PC-9 (cell line): ENCODE measurements at regions of chr1 and their contacts with region 1.

Region 1: DNA sequence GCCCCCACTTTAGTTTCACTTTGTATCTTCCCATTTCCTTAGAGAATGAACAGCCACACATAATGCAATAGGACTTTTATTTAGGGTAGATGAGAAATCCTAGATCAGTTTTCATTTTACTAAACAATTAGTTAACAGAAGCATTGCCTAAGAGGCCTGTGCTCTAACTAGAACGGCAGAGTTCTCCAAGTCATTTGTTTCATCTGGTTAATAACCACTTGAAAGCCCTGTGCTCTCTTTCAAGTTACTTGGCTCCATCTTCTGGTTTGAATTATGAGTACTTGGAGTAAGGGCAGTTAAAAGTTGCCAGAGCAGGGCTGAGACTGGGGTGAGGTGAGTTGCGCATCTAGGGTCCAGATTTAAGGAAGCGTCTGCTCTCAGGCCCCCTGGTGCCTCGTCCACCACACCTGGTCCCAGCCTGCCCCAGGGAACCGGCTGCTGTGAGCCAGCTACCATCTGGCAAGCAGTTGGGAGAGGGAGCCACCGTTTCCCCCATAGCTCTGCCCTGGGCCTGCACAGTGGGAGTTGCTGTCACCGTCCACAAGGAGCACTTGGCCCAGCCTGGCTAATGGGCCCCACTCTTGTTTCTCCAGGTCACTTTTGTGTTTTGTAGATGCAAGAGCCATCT is 18.1 kb upstream of the SLC44A3 start:
- DNase-seq: peak; percentile 48 to 93
- H3K4me3 ChIP-seq: peak overlapping the region; percentile 22; the same call in 1 of the 2 replicates
- H3K27ac ChIP-seq: peak overlapping the region; percentile 79
- H3K4me1 ChIP-seq: peaks cover 24% of the 10 kb centered on the region
- H3K27me3 ChIP-seq: no peaks in the 10 kb centered on the region
- CTCF ChIP-seq: peak; percentile 85

Region 2: DNA sequence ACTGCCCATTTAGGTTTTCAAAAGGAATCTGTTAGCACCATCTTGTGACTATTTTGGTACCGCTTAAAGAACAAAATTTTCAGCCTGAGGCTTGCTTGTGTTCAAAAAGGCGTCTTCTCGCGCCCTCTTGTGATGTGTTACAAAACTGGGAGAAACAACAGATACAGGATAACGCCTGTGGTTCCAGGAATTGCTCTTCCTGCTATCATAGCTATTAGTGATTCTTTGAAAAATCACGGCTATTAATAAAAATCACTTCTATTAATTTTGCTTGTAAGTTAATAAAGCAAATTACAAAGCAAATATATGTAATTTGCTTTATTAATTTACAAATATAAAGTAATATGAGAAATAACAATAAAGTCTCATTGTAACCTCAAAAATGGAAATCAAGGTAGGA is 466.1 kb before region 1 on chr1:
- CTCF ChIA-PET with region 1: interaction called, 4 read pairs
- POLR2A ChIA-PET with region 1: no interaction called
- intact Hi-C with region 1: loop called (anchors 1 kb)
- DNase-seq: peak; percentile 67 to 95
- H3K4me3 ChIP-seq: no peak overlapping the region
- H3K27ac ChIP-seq: peak overlapping the region; percentile 22; the same call in 1 of the 2 replicates
- H3K4me1 ChIP-seq: peaks cover 55% of the 10 kb centered on the region
- H3K27me3 ChIP-seq: no peaks in the 10 kb centered on the region
- CTCF ChIP-seq: peak; percentile 99

Region 3: DNA sequence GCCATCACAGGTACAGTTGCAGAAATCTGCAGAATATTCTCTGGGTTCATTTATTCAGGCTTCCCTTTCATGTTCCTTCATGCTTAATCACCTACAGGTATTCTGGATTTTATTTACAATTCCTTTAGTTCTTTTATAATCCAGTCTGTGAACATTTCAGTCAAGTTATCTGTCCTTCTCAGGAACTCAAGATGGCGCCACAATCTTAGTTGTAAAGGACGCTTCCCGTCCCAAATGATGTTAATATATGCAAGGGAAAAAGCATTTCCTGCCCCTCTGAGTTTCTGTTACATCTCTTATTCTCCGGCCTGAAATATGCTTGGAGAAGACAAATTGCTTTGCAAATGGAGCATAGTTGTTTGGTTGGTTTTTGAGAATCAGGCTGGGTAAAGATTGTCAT is 279.7 kb before region 1 on chr1:
- CTCF ChIA-PET with region 1: no interaction called
- POLR2A ChIA-PET with region 1: interaction called, 8 read pairs
- intact Hi-C with region 1: loop called (anchors 1 kb)
- DNase-seq: no peak
- H3K4me3 ChIP-seq: no peak overlapping the region
- H3K27ac ChIP-seq: no peak overlapping the region
- H3K4me1 ChIP-seq: peaks cover 12% of the 10 kb centered on the region
- H3K27me3 ChIP-seq: no peaks in the 10 kb centered on the region
- CTCF ChIP-seq: peak; percentile 63

Region 4: GRCh38 chr1:94622757-94623156 is 179.3 kb before region 1 on chr1:
- CTCF ChIA-PET with region 1: interaction called, 3 read pairs
- POLR2A ChIA-PET with region 1: interaction called, 4 read pairs
- intact Hi-C with region 1: loop called (anchors 1 kb)
- DNase-seq: peak; percentile 95 to 99
- H3K4me3 ChIP-seq: peak overlapping the region; percentile 41; the same call in 1 of the 2 replicates
- H3K27ac ChIP-seq: peak overlapping the region; percentile 99
- H3K4me1 ChIP-seq: peaks cover 72% of the 10 kb centered on the region
- H3K27me3 ChIP-seq: no peaks in the 10 kb centered on the region
- CTCF ChIP-seq: no peak

Region 5: DNA sequence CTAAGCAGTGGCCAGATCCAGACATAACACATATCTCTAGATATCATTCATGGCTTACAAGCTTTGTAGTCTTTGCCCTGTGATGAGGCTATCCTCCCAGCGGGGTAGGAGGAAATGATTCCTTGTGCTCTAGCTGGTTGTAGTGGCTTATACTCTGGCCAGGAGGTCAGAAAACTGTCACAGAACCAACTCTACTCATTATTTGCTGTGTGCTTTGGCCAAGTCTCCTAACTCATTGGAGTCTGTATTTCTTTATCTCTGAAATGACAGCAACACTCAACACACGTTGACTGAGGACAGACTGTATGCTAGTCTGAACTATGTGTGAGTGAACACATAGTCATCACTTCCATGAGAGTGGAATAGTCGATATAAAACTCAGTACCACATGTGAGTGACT is 143.8 kb before region 1 on chr1:
- CTCF ChIA-PET with region 1: no interaction called
- POLR2A ChIA-PET with region 1: no interaction called
- intact Hi-C with region 1: no loop called
- DNase-seq: no peak
- H3K4me3 ChIP-seq: no peak overlapping the region
- H3K27ac ChIP-seq: peak overlapping the region; percentile 57
- H3K4me1 ChIP-seq: peaks cover 61% of the 10 kb centered on the region
- H3K27me3 ChIP-seq: no peaks in the 10 kb centered on the region
- CTCF ChIP-seq: no peak

Region 6: DNA sequence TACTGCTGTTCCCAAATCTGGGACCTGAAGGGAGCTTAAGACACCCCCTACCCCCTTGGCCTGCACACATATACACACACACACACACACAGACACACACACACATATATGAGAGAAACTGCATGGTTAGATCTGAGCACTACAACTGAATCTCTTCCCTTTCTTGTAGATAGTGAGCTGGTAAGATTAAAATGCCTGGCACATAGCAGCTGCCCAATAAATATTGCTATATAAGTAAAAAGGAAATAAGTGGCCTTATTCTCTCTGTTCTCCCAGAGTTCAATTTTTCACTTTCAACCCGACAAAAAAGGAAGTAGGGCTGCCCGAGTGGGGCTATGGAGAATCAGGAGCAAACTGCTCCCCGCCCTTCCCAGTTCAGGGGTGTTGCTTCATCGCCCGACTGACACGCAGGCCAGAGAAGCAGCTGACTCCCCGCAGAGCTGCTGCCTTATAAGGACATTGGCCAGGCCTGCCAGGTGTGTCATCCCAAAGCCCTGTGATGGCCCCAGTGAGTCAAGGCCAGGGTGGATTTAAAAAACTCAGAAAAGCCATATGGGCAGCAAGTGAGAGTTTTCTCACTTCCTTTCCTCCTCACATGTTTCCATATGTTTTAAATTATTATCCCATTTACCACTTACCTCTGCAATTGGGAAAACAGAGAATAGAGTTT is 88.4 kb before region 1 on chr1:
- CTCF ChIA-PET with region 1: interaction called, 3 read pairs
- POLR2A ChIA-PET with region 1: no interaction called
- intact Hi-C with region 1: loop called (anchors 5 kb)
- DNase-seq: peak; percentile 86 to 99
- H3K4me3 ChIP-seq: 0 out of 2 replicates have a peak overlapping the region, but pooled peaks have one; percentile 9
- H3K27ac ChIP-seq: peak overlapping the region; percentile 79
- H3K4me1 ChIP-seq: peaks cover 23% of the 10 kb centered on the region
- H3K27me3 ChIP-seq: no peaks in the 10 kb centered on the region
- CTCF ChIP-seq: no peak

Region 7: DNA sequence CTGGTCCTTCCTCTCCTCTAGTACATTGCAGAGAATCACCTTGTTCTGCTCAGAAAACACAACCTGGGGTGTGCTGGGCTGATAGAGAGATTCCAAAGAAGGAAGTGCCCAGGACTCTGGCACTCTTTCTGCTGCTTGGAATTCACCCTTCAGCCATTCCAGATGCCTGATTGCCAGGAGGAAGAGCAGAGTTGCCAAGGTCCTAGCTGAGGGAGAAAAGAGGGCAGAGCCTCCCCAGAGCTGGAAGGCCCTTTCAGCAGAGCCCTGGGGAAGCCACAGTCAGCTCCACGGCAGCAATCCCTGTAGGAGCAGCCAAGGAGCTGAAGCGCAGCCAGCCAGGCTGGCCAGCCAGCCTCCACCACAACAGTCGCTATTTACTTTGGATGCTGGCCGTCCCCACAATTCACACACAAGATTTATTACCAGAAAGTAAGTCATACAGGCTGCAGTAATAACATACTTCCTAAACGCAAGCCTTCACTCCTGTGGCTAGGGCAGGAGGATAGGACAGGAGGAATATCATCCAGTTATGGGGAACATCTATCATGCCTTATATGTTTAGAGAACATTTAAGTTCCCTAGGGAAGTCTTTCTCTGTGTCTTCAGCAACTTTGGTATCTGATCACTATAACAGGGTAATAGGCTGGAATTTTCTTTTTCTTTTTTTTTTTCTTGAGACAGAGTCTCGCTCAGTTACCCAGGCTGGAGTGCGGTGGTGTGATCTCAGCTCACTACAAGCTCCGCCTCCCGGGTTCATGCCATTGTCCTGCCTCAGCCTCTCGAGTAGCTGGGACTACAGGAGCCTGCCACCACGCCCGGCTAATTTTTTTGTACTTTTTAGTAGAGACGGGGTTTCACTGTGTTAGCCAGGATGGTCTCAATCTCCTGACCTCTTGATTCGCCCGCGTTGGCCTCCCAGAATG is 18.4 kb before region 1 on chr1:
- CTCF ChIA-PET with region 1: no interaction called
- POLR2A ChIA-PET with region 1: interaction called, 3 read pairs
- intact Hi-C with region 1: loop called (anchors 1 kb)
- DNase-seq: peak; percentile 87 to 94
- H3K4me3 ChIP-seq: peak overlapping the region; percentile 10; the same call in 1 of the 2 replicates
- H3K27ac ChIP-seq: peak overlapping the region; percentile 91
- H3K4me1 ChIP-seq: peaks cover 36% of the 10 kb centered on the region
- H3K27me3 ChIP-seq: no peaks in the 10 kb centered on the region
- CTCF ChIP-seq: no peak